H1 (cell line): ENCODE measurements at regions of chrX and their contacts with region 1.

Region 1: DNA sequence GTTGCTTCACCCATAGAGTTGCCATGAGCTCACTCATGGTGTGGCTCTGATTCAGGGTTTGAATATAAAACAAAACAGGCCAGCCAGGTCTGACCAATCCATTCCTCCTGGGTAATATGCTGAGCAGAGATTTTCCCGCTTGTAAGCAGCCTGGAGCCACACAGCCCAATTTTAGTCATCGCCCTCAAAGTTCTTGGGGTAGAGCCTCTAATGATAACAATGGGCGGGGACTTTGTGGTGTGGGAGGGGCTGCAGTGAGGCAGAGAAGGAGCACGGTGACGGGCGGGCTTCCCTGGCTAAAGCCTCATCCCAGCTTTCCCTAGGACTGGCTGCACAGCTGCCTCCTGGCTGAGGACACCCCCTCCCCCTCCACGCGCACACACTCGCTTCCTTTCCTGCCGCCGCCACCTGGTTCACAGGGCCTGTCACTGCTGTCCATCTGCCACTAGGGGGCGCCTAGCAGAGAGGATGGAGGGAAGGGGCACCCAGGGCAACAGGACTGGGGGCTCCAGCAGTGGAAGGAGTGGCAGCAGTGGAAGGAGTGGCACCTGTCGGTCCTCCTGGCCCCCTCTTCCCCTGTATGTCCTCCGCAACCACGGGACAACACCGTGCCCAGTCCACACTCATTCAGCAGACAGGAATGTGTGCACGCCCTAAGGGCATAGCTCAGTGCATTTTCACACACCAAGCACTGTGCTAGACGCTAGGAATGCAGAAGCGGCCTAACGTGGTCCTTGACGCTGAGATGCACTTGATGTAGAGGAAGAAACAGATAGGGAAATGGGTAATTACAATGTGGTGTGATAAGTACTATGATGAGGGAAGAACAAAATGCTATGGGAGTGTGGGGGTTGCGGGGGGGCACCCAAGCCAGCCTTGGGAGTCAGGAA is 26.8 kb downstream of the PRPS1 start:
- DNase-seq: peak; percentile 50 to 75
- H3K4me3 ChIP-seq: peak overlapping the region in 1 of 4 experiments; percentile 48; a peak in 1 of 8 replicates
- H3K27ac ChIP-seq: no peak overlapping the region; the same call in 1 of the 2 replicates
- H3K4me1 ChIP-seq: peaks cover 0 to 5% (median 0%) of the 10 kb centered on the region in 4 experiments; a peak in 2 of 7 replicates
- H3K27me3 ChIP-seq: no peaks in the 10 kb centered on the region
- CTCF ChIP-seq: peak; percentile 74 to 89 (median 87)
- EP300 ChIP-seq: peak in 1 of 2 experiments; percentile 32; a peak in 1 of 3 replicates
- POLR2A ChIP-seq: no peak
- RAD21 ChIP-seq: peak; percentile 49 to 59; a peak in 3 of 4 replicates

Region 2: GRCh38 chrX:107050195-107050709 is 604.9 kb before region 1 on chrX:
- CTCF ChIA-PET with region 1: no interaction called
- POLR2A ChIA-PET with region 1: no interaction called
- DNase-seq: no peak
- H3K4me3 ChIP-seq: no peak overlapping the region
- H3K27ac ChIP-seq: no peak overlapping the region
- H3K4me1 ChIP-seq: no peaks in the 10 kb centered on the region
- H3K27me3 ChIP-seq: no peaks in the 10 kb centered on the region
- CTCF ChIP-seq: no peak
- EP300 ChIP-seq: no peak
- POLR2A ChIP-seq: no peak
- RAD21 ChIP-seq: no peak

Region 3: GRCh38 chrX:107537815-107538214 is 117.3 kb before region 1 on chrX:
- CTCF ChIA-PET with region 1: interaction called, 17 read pairs
- POLR2A ChIA-PET with region 1: interaction called, 3 read pairs
- DNase-seq: peak in 1 of 2 experiments; percentile 51
- H3K4me3 ChIP-seq: no peak overlapping the region
- H3K27ac ChIP-seq: no peak overlapping the region
- H3K4me1 ChIP-seq: no peaks in the 10 kb centered on the region
- H3K27me3 ChIP-seq: no peaks in the 10 kb centered on the region
- CTCF ChIP-seq: peak; percentile 28 to 68 (median 60)
- EP300 ChIP-seq: no peak
- POLR2A ChIP-seq: no peak
- RAD21 ChIP-seq: peak; percentile 77 to 83

Region 4: DNA sequence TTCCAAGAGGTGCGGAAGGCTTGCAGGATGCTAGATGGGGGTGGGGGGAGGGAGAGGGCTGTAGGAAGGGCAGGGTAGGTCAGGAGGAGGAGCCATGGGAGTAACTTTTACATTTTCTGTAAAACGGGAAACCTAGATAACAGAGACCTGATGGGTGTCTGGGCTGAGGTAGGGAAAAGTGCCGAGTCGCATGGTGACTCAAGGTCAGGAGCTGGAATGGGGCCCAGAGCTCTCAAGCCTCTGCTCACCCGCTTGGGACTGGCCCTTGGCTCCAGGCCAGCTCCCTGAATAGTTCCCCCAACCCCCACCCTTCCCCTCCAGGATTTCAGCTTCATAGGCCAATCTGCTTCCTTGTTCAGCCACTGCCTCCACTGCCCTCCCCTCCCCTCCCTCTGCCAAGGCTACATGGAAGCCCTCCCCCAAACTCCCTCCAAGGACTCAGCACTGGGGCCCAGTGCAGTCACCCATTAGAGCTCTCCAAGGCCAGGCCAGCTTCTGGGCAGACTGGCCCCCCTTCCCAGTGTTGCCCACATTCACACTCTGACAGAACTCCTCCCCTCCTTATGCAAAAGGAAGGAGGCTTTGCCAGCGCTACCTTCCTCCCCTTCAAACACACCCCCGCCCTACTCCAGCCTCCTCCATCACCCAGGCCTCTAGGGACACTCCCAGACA is 76.8 kb after region 1 on chrX:
- CTCF ChIA-PET with region 1: interaction called, 325 read pairs
- POLR2A ChIA-PET with region 1: no interaction called
- DNase-seq: no peak
- H3K4me3 ChIP-seq: no peak overlapping the region
- H3K27ac ChIP-seq: no peak overlapping the region; the same call in 1 of the 2 replicates
- H3K4me1 ChIP-seq: peaks cover 0 to 19% (median 10%) of the 10 kb centered on the region in 4 experiments; a peak in 6 of 7 replicates
- H3K27me3 ChIP-seq: no peaks in the 10 kb centered on the region
- CTCF ChIP-seq: no peak
- EP300 ChIP-seq: no peak
- POLR2A ChIP-seq: 0 out of 3 replicates have a peak, but pooled peaks of 1 of the 2 experiments have one; percentile 32
- RAD21 ChIP-seq: no peak

Region 5: GRCh38 chrX:107766470-107767150 is 111.5 kb after region 1 on chrX:
- CTCF ChIA-PET with region 1: interaction called, 14 read pairs
- POLR2A ChIA-PET with region 1: no interaction called
- DNase-seq: no peak
- H3K4me3 ChIP-seq: no peak overlapping the region
- H3K27ac ChIP-seq: no peak overlapping the region
- H3K4me1 ChIP-seq: peaks cover 0 to 2% (median 1%) of the 10 kb centered on the region in 4 experiments; a peak in 1 of 7 replicates
- H3K27me3 ChIP-seq: no peaks in the 10 kb centered on the region; a peak in 1 of 7 replicates
- CTCF ChIP-seq: no peak
- EP300 ChIP-seq: no peak
- POLR2A ChIP-seq: no peak
- RAD21 ChIP-seq: no peak

Region 6: GRCh38 chrX:107776649-107777535 is 121.8 kb after region 1 on chrX:
- CTCF ChIA-PET with region 1: interaction called, 209 read pairs
- POLR2A ChIA-PET with region 1: interaction called, 4 read pairs
- DNase-seq: peak; percentile 53 to 55
- H3K4me3 ChIP-seq: peak overlapping the region; percentile 26 to 62 (median 41); a peak in 5 of 8 replicates
- H3K27ac ChIP-seq: no peak overlapping the region
- H3K4me1 ChIP-seq: peaks cover 0 to 10% (median 6%) of the 10 kb centered on the region in 4 experiments
- H3K27me3 ChIP-seq: peaks cover 20 to 39% (median 32%) of the 10 kb centered on the region in 4 experiments
- CTCF ChIP-seq: peak; percentile 42 to 74 (median 67)
- EP300 ChIP-seq: no peak
- POLR2A ChIP-seq: no peak
- RAD21 ChIP-seq: peak; percentile 82 to 90

Region 7: GRCh38 chrX:107894038-107894437 is 238.9 kb after region 1 on chrX:
- CTCF ChIA-PET with region 1: interaction called, 12 read pairs
- POLR2A ChIA-PET with region 1: interaction called, 3 read pairs
- DNase-seq: peak in 1 of 2 experiments; percentile 39
- H3K4me3 ChIP-seq: no peak overlapping the region
- H3K27ac ChIP-seq: no peak overlapping the region
- H3K4me1 ChIP-seq: no peaks in the 10 kb centered on the region
- H3K27me3 ChIP-seq: no peaks in the 10 kb centered on the region
- CTCF ChIP-seq: peak in 2 of 3 experiments; percentile 37 to 43; a peak in 2 of 4 replicates
- EP300 ChIP-seq: no peak
- POLR2A ChIP-seq: no peak
- RAD21 ChIP-seq: peak; percentile 72 to 80